CD4-positive, alpha-beta memory T cell (primary cell): ENCODE measurements at regions of chr12 and their contacts with region 1.

Region 1: GRCh38 chr12:6890789-6891645 is 13.6 kb upstream of the LRRC23 start:
- DNase-seq: peak; percentile 97 to 98 (median 98)
- H3K4me3 ChIP-seq: peak overlapping the region; percentile 74 to 93
- H3K4me3 Mint-ChIP-seq: peak overlapping the region; percentile 82 to 87 (median 85)
- H3K27ac ChIP-seq: peak overlapping the region; percentile 91
- H3K27ac Mint-ChIP-seq: peak overlapping the region; percentile 92 to 98 (median 95)
- H3K4me1 ChIP-seq: peaks cover 16% of the 10 kb centered on the region
- H3K4me1 Mint-ChIP-seq: peaks cover 5 to 15% (median 11%) of the 10 kb centered on the region in 4 donors
- H3K27me3 ChIP-seq: no peaks in the 10 kb centered on the region
- H3K27me3 Mint-ChIP-seq: no peaks in the 10 kb centered on the region

Region 2: DNA sequence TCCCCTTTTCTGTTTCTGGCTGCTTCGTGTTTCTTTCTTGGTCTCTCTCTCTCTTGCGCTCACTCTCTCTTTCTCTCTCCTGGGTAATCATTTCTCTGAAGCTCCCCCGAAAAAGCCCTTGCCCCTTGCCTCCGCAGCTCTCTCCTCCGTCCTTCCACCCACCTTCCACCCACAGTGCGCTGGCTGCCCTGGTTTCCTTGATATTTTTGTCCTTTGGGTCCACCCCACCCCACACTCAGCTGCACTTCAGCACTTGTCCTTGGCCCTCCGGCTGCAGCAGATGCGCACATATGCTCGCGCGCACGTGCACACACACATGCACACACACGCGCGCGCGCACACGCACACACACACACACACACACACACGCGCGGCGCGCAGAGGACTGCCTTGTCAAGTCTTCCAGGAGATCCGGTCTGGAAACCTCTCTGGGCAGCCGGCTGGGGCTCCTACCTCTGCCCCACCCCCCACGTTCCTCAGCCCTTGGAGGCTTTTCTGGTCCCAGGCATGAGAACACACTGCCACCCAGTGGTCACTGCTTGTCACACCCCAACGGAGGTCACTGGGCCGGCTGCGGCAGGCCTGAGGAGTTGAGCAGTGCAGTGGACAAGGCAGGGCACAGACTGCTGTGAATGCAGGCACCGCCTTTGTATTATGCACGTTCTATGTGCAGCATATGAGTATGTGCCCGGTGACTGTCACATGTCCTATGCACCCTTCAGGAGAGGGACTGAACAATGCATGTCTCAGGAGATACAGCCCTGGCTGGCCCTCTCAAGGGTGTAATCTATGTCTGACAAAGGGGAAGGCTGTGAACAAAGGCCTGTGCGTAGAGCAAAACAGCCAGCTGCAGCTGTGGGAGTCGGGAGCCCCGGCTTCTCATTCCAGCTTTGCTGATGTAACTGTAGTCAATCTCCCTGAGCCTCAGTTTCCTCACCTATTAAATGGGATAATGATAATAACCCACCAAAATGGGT is 112.2 kb before region 1 on chr12:
- CTCF ChIA-PET with region 1: no interaction called
- POLR2A ChIA-PET with region 1: no interaction called
- intact Hi-C with region 1: no loop called
- DNase-seq: peak; percentile 84 to 90 (median 84)
- H3K4me3 ChIP-seq: peak overlapping the region in 1 of 2 donors; percentile 58
- H3K4me3 Mint-ChIP-seq: peak overlapping the region; percentile 67 to 97 (median 86)
- H3K27ac ChIP-seq: peak overlapping the region; percentile 6
- H3K27ac Mint-ChIP-seq: peak overlapping the region; percentile 49 to 98 (median 90)
- H3K4me1 ChIP-seq: peaks cover 28% of the 10 kb centered on the region
- H3K4me1 Mint-ChIP-seq: peaks cover 22 to 66% (median 45%) of the 10 kb centered on the region in 4 donors
- H3K27me3 ChIP-seq: peaks cover 6% of the 10 kb centered on the region
- H3K27me3 Mint-ChIP-seq: peaks cover 6 to 21% of the 10 kb centered on the region in 2 donors

Region 3: DNA sequence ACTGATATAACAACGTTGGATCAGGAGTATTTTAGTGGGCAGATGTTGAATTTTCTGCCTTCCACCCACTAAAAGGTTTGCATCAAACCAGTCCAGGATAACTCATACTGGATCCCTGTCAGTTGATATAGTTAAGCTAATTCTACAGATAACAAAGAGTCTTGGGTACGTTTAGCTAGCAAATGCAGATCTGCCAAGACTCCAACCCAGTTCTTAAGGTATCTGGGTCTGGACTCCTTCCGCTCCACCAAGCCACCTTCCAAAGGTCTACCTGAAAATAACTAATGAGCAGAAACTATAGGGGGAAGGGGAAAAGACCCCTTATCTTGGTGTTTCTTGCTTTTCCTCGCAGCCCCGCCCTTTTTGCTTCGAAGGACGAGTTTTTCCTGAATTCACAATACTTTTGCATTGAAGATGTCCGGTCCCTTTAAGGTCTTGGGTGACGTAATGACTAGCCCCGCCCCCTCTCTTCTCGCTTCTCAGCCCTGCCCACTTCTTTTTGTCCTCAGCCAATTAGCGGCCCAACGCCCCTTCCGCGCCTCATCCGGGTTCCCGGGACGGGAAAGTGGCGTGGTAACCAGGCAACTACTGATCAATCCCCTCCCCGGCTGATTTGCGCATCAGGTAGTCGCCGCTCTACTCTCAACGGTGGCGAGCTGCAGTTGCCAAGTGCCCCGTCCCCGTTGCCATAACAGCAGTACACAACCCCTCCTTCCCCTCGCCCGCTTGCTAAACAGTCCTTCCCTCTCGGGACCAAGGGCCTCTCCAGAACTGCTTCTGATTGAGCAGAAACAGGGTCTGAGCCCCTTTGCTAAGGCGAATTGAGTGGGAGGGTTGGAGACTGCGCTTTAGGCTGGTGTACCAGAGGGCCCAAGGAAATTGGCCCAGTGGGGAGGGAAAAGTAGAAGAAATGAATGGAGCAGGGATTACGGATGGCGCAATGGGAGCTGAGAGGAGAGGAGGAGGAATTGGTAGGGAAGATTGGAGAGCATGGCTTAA is 13.6 kb after region 1 on chr12 and contains the start of gene LRRC23:
- CTCF ChIA-PET with region 1: interaction called, 16 read pairs
- POLR2A ChIA-PET with region 1: interaction called, 20 read pairs
- intact Hi-C with region 1: loop called (anchors 1 kb)
- DNase-seq: peak; percentile 97 to 99 (median 98)
- H3K4me3 ChIP-seq: peak within 1 kb of the TSS; percentile 74 to 95
- H3K4me3 Mint-ChIP-seq: no peak within 1 kb of the TSS
- H3K27ac ChIP-seq: peak within 1 kb of the TSS; percentile 86
- H3K27ac Mint-ChIP-seq: no peak within 1 kb of the TSS
- H3K4me1 ChIP-seq: peaks cover 19% of the 10 kb centered on the region
- H3K4me1 Mint-ChIP-seq: peaks cover 0 to 8% (median 6%) of the 10 kb centered on the region in 4 donors
- H3K27me3 ChIP-seq: no peaks in the 10 kb centered on the region
- H3K27me3 Mint-ChIP-seq: no peaks in the 10 kb centered on the region
- total RNA-seq, gene LRRC23: 8.3 to 9.1 TPM

Region 4: DNA sequence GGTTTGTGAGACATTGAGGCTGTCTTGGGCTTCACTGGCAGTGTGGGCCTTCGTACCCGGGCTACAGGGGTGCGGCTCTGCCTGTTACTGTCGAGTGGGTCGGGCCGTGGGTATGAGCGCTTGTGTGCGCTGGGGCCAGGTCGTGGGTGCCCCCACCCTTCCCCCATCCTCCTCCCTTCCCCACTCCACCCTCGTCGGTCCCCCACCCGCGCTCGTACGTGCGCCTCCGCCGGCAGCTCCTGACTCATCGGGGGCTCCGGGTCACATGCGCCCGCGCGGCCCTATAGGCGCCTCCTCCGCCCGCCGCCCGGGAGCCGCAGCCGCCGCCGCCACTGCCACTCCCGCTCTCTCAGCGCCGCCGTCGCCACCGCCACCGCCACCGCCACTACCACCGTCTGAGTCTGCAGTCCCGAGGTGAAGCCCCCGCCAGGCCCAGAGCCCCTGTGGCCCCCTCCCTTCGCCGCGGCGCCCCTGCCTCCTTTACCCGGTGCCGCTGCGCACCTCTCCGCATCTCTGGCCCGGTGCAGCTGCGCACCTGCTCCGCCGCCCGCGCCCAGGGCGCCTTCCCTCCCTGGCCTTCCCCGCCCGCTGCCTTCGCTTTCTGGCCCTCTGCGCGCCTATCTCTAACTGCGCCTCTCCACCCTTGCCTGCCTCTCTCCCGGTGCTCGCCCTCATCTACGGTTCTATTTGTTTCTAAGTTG is 23.4 kb after region 1 on chr12 and contains the start of gene ENO2:
- CTCF ChIA-PET with region 1: interaction called, 10 read pairs
- POLR2A ChIA-PET with region 1: interaction called, 39 read pairs
- intact Hi-C with region 1: loop called (anchors 1 kb)
- DNase-seq: peak; percentile 83 to 93 (median 85)
- H3K4me3 ChIP-seq: peak within 1 kb of the TSS; percentile 69 to 76
- H3K4me3 Mint-ChIP-seq: peak within 1 kb of the TSS; percentile 90 to 98 (median 96)
- H3K27ac ChIP-seq: peak within 1 kb of the TSS; percentile 77
- H3K27ac Mint-ChIP-seq: peak within 1 kb of the TSS; percentile 88 to 98 (median 96)
- H3K4me1 ChIP-seq: peaks cover 29% of the 10 kb centered on the region
- H3K4me1 Mint-ChIP-seq: peaks cover 12 to 44% (median 27%) of the 10 kb centered on the region in 4 donors
- H3K27me3 ChIP-seq: no peaks in the 10 kb centered on the region
- H3K27me3 Mint-ChIP-seq: no peaks in the 10 kb centered on the region
- total RNA-seq, gene ENO2: 187 to 190 TPM

Region 5: DNA sequence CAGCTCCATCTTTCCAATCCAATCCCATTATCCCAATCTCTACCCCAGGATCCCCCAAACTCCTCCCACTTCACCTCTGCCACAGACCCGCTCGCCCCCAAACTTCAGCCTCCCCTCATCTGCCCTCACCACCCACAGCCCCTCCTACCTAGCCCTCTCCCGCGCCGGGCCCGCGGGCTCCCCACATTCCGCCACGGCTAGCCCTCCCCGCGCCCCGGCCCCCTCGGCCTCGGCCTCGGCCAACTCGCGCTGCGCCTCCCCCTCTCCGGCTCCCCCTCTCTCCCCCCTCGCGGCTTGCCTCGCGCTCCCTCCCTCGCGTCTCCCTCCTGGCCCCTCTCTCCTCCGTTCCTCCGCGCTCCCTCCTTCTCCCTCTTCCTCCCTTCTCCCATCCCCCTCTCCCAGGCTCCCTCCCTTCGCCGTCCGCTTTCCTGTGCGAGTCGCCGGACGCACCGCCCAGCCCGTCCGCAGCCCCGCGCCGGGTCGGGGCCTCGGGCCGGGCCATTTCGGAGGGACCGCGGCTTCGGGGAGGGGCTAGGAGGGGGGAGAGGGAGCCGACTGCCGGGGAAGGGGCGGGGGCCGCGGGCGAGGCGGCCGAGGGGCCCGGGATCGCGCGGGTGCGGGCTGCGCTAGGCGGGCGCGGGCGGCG is 36.5 kb after region 1 on chr12 and contains the start of gene ATN1:
- CTCF ChIA-PET with region 1: interaction called, 4 read pairs
- POLR2A ChIA-PET with region 1: interaction called, 18 read pairs
- intact Hi-C with region 1: no loop called
- DNase-seq: peak; percentile 37 to 65 (median 45)
- H3K4me3 ChIP-seq: peak within 1 kb of the TSS; percentile 57 to 65
- H3K4me3 Mint-ChIP-seq: peak within 1 kb of the TSS; percentile 88 to 94 (median 90)
- H3K27ac ChIP-seq: peak within 1 kb of the TSS; percentile 67
- H3K27ac Mint-ChIP-seq: peak within 1 kb of the TSS; percentile 91 to 97 (median 94)
- H3K4me1 ChIP-seq: peaks cover 43% of the 10 kb centered on the region
- H3K4me1 Mint-ChIP-seq: peaks cover 31 to 57% (median 43%) of the 10 kb centered on the region in 4 donors
- H3K27me3 ChIP-seq: no peaks in the 10 kb centered on the region
- H3K27me3 Mint-ChIP-seq: no peaks in the 10 kb centered on the region
- total RNA-seq, gene ATN1: 32.2 to 33.0 TPM